Endothelial cell of umbilical vein (primary cell): ENCODE measurements at regions of chr15 and their contacts with region 1.

Region 1: GRCh38 chr15:43204016-43204901 is 16.6 kb downstream of the EPB42 start:
- DNase-seq: peak; percentile 67
- H3K4me3 ChIP-seq: no peak overlapping the region
- H3K27ac ChIP-seq: no peak overlapping the region
- H3K4me1 ChIP-seq: no peaks in the 10 kb centered on the region
- H3K27me3 ChIP-seq: peaks cover 5 to 16% of the 10 kb centered on the region in 2 experiments
- CTCF ChIP-seq: peak; percentile 81 to 82
- POLR2A ChIP-seq: no peak

Region 2: DNA sequence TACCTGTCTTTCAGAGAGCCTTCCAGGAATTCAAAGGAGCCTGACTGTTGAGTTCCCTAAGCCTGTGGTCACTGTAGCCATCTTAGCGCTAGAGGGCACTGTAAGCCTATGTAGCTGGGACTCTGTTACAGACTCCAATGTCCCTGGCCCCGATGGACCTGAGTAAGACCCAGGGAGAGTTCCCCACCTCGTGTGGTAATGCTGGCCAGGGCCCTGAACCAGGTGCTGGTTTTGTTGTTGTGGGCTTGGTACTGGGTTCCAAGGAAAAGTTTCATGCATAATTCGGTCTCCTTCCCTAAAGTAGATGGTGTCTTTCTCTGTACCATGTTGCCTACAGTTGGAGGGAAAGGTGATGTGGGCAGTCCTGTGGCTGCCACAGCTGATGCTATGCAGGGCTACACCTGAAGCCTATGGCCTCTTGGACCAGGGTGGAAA is 499.8 kb before region 1 on chr15:
- CTCF ChIA-PET with region 1: interaction called, 31 read pairs
- POLR2A ChIA-PET with region 1: no interaction called
- dilution Hi-C with region 1: no loop called
- intact Hi-C with region 1: loop called (anchors 10 kb)
- DNase-seq: peak; percentile 79
- H3K4me3 ChIP-seq: no peak overlapping the region
- H3K27ac ChIP-seq: no peak overlapping the region
- H3K4me1 ChIP-seq: peaks cover 12% of the 10 kb centered on the region
- H3K27me3 ChIP-seq: no peaks in the 10 kb centered on the region
- CTCF ChIP-seq: peak; percentile 81 to 85
- POLR2A ChIP-seq: no peak

Region 3: DNA sequence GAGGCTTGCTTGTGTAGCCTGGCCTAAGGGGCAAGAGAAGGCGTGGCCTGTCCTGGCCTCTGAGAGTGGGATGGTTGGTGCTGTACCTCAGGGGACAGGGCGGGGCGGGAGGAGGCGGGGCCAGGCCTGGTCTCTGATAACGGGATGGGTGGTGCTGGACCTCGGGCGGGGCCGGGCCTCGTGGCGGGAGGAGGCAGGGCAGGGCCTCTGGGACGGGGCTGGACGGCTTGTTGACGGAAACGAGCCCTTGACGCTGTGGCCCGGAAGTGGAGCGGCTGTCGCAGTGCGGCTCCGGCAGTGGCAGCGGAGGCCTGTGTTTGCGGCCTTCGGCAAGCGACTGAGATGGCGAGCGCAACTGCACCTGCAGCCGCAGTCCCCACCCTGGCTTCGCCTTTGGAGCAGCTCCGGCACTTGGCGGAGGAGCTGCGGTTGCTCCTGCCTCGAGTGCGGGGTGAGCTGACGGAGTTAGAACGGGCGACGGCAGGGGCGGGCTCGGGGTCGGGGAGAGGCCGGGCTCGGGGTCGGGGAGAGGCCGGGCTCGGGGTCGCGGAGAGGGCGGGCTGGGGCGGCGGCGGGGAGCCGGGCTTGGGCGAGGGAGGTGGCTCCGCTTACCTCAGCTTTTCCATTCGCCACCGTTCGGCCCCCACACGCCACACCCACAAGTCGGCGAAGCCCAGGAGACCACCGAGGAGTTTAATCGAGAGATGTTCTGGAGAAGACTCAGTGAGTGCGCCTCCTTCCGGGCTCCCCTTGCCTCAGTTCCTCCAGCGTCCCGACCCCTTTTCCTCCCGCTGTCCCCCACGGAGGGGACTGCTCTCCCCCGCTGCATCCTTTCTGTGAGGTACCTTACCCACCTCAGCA is 18.9 kb before region 1 on chr15 and contains the start of gene CCNDBP1:
- CTCF ChIA-PET with region 1: interaction called, 45 read pairs
- POLR2A ChIA-PET with region 1: interaction called, 4 read pairs
- dilution Hi-C with region 1: no loop called
- intact Hi-C with region 1: loop called (anchors 1 kb)
- DNase-seq: peak; percentile 70
- H3K4me3 ChIP-seq: peak within 1 kb of the TSS; percentile 32 to 76 (median 57)
- H3K27ac ChIP-seq: peak within 1 kb of the TSS; percentile 9
- H3K4me1 ChIP-seq: peaks cover 19% of the 10 kb centered on the region
- H3K27me3 ChIP-seq: no peaks in the 10 kb centered on the region
- CTCF ChIP-seq: peak in 1 of 2 donors; percentile 35
- POLR2A ChIP-seq: peak; percentile 73
- total RNA-seq, gene CCNDBP1: 39.9 and 41.4 TPM in 2 replicates

Region 4: GRCh38 chr15:43218908-43219706 is 14.8 kb after region 1 on chr15:
- CTCF ChIA-PET with region 1: interaction called, 26 read pairs
- POLR2A ChIA-PET with region 1: no interaction called
- dilution Hi-C with region 1: no loop called
- intact Hi-C with region 1: no loop called
- DNase-seq: peak; percentile 6
- H3K4me3 ChIP-seq: no peak overlapping the region
- H3K27ac ChIP-seq: no peak overlapping the region
- H3K4me1 ChIP-seq: no peaks in the 10 kb centered on the region
- H3K27me3 ChIP-seq: peaks cover 5 to 26% of the 10 kb centered on the region in 2 experiments
- CTCF ChIP-seq: peak; percentile 19 to 27
- POLR2A ChIP-seq: no peak